Transverse colon (tissue), 4 donors: ENCODE measurements at regions of chr5 and their contacts with region 1.

Region 1: GRCh38 chr5:131109540-131110255 is 55.4 kb downstream of the HINT1 start:
- DNase-seq: no peak
- H3K4me3 ChIP-seq: no peak overlapping the region
- H3K27ac ChIP-seq: no peak overlapping the region
- H3K4me1 ChIP-seq: peaks cover 0 to 11% (median 3%) of the 10 kb centered on the region in 4 donors
- H3K27me3 ChIP-seq: no peaks in the 10 kb centered on the region
- CTCF ChIP-seq: peak; percentile 60 to 79 (median 65)
- EP300 ChIP-seq: no peak
- POLR2A ChIP-seq: no peak

Region 2: DNA sequence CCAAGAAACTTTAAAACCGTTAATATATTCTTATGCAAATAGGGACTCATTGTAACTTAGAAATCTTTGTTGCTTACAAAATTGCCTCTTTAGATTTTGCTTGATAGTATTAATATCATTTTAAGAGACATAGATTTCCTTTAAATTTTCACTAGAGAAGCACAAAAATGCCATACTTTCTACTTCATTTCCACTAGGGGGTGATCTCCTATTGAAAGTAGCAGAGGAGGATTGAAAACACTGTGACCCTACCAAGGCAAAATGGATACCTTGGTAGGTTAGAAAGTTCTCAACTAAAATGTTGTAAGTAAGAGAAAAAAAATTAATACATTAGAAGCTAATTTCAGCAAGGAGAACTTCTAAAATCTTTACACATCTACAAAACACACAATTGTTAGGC is 1000.5 kb before region 1 on chr5:
- in situ Hi-C with region 1: loop called in 2 of 4 experiments (anchors 25 kb)
- intact Hi-C with region 1: no loop called
- DNase-seq: no peak
- H3K4me3 ChIP-seq: no peak overlapping the region
- H3K27ac ChIP-seq: no peak overlapping the region
- H3K4me1 ChIP-seq: no peaks in the 10 kb centered on the region
- H3K27me3 ChIP-seq: no peaks in the 10 kb centered on the region
- CTCF ChIP-seq: peak in 4 of 5 experiments; percentile 29 to 47 (median 39)
- EP300 ChIP-seq: no peak
- POLR2A ChIP-seq: no peak

Region 3: GRCh38 chr5:130871346-130872086 is 238.2 kb before region 1 on chr5:
- in situ Hi-C with region 1: loop called in 3 of 4 experiments (anchors 10 to 25 kb)
- intact Hi-C with region 1: no loop called
- DNase-seq: peak; percentile 21
- H3K4me3 ChIP-seq: no peak overlapping the region
- H3K27ac ChIP-seq: no peak overlapping the region
- H3K4me1 ChIP-seq: no peaks in the 10 kb centered on the region
- H3K27me3 ChIP-seq: no peaks in the 10 kb centered on the region
- CTCF ChIP-seq: peak; percentile 38 to 74 (median 67)
- EP300 ChIP-seq: no peak
- POLR2A ChIP-seq: no peak

Region 4: GRCh38 chr5:131769961-131770360 is 660.3 kb after region 1 on chr5:
- in situ Hi-C with region 1: no loop called
- intact Hi-C with region 1: no loop called
- DNase-seq: no peak
- H3K4me3 ChIP-seq: no peak overlapping the region
- H3K27ac ChIP-seq: no peak overlapping the region
- H3K4me1 ChIP-seq: peaks cover 0 to 14% (median 2%) of the 10 kb centered on the region in 4 donors
- H3K27me3 ChIP-seq: no peaks in the 10 kb centered on the region
- CTCF ChIP-seq: no peak
- EP300 ChIP-seq: no peak
- POLR2A ChIP-seq: no peak

Region 5: GRCh38 chr5:132495667-132496190 is 1386.0 kb after region 1 on chr5:
- in situ Hi-C with region 1: no loop called
- intact Hi-C with region 1: no loop called
- DNase-seq: peak; percentile 83
- H3K4me3 ChIP-seq: peak overlapping the region; percentile 46 to 68 (median 56)
- H3K27ac ChIP-seq: peak overlapping the region; percentile 95 to 99 (median 98)
- H3K4me1 ChIP-seq: peaks cover 37 to 61% (median 47%) of the 10 kb centered on the region in 4 donors
- H3K27me3 ChIP-seq: no peaks in the 10 kb centered on the region
- CTCF ChIP-seq: no peak
- EP300 ChIP-seq: peak; percentile 60
- POLR2A ChIP-seq: peak; percentile 67